GM12878 (cell line): ENCODE measurements at regions of chr2 and their contacts with region 1.

Region 1: GRCh38 chr2:131580187-131580586 is 52.5 kb downstream of the CCDC74A start:
- DNase-seq: no peak
- ATAC-seq: peak; percentile 72
- H3K4me3 ChIP-seq: no peak overlapping the region
- H3K27ac ChIP-seq: peak overlapping the region; percentile 80
- H3K4me1 ChIP-seq: peaks cover 67% of the 10 kb centered on the region
- H3K27me3 ChIP-seq: no peaks in the 10 kb centered on the region
- CTCF ChIP-seq: 0 out of 6 replicates have a peak, but pooled peaks of 1 of the 3 experiments have one; percentile 2
- EP300 ChIP-seq: no peak
- POLR2A ChIP-seq: no peak
- RAD21 ChIP-seq: peak; percentile 21; the same call in 1 of the 2 replicates

Region 2: DNA sequence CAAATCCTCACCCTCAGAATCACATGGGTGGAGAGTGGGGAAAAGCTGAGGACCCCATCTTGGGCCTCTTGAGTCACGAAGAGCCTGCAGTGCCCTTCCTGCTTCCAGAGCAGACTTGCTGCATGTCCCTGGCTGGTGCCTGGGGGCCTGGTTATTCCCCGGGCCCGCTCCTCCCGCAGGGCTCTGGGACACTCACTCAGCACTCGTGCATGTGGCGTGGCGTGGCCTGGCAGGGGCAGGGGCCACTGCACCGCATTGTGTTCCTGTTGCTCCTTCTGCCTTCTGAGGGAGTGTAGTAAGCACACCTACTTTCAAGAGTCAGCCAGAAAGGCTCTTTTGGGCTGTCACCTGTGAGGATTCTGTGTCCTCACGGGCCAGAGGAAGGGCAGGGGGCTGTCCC is 70.6 kb before region 1 on chr2:
- CTCF ChIA-PET with region 1: no interaction called
- POLR2A ChIA-PET with region 1: no interaction called
- RAD21 ChIA-PET with region 1: no interaction called
- SMC1A ChIA-PET with region 1: no interaction called
- in situ Hi-C with region 1: no loop called
- intact Hi-C with region 1: no loop called
- DNase-seq: no peak
- ATAC-seq: no peak
- H3K4me3 ChIP-seq: no peak overlapping the region
- H3K27ac ChIP-seq: no peak overlapping the region
- H3K4me1 ChIP-seq: peaks cover 9% of the 10 kb centered on the region
- H3K27me3 ChIP-seq: no peaks in the 10 kb centered on the region
- CTCF ChIP-seq: no peak
- EP300 ChIP-seq: no peak
- POLR2A ChIP-seq: no peak
- RAD21 ChIP-seq: no peak

Region 3: DNA sequence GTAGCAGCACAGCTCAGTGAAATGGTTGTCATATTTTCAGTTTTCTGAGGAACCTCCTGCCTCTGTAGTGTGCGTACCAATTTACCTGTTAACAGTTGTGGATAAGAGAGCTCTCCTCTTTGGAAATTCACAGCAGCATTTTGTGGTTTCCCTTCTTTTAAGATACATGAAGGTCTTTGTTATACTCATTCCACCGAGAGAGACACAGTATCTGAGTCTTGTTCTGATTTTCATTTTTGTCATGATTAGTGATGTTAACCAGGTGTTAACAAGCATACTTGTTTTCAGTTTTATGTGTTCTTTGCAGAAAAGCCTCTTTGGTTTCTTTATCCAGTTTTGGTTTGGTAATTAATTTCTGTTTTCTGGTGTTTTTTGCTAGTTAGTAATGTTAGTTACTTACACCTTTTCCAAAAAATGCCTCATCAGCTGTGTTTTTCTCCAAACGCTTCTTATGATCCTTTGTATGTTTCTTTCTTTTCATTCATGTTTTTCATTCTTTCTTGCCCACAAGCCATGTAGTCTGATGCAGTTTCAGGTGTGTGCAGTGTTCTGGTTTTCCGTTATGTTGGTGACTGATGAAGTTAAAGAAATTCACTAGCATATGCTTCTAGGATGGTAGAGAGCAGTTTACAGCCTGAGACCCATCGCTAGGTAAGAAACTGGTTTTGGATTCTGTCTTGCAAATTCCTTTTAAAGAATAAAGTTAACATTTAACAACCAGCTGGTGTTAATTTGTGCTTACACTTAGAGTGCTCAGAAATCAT is 22.4 kb before region 1 on chr2:
- CTCF ChIA-PET with region 1: no interaction called
- POLR2A ChIA-PET with region 1: no interaction called
- RAD21 ChIA-PET with region 1: no interaction called
- SMC1A ChIA-PET with region 1: interaction called, 3 read pairs
- in situ Hi-C with region 1: no loop called
- intact Hi-C with region 1: loop called (anchors 2 kb)
- DNase-seq: no peak
- ATAC-seq: peak; percentile 77
- H3K4me3 ChIP-seq: peak overlapping the region; percentile 59
- H3K27ac ChIP-seq: peak overlapping the region; percentile 65
- H3K4me1 ChIP-seq: peaks cover 5% of the 10 kb centered on the region
- H3K27me3 ChIP-seq: no peaks in the 10 kb centered on the region
- CTCF ChIP-seq: no peak
- EP300 ChIP-seq: no peak
- POLR2A ChIP-seq: no peak
- RAD21 ChIP-seq: no peak